Heart left ventricle (tissue), 16 donors: ENCODE measurements at regions of chr13 and their contacts with region 1.

Region 1: DNA sequence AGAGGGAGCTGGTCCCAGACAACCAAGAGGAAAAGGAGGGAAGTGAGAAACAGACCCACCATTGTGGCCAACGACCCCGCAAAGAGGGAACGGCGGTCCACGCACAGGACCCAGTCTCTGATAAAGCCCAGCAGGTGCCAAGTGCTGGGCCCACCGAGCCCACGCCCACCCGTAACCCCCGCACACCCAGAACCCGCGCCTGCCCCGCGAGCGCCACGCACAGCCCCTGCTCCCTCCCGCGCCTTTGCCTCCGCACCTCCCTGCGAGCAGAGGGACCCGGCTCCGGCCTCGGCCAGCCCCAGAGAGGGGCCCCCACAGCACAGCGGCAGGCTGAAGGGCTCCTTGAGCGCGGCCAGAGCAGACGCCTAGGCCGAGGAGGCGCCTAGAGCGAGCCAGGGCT is 1192.2 kb downstream of the PCDH17 start:
- DNase-seq: no peak
- ATAC-seq: no peak
- H3K4me3 ChIP-seq: no peak overlapping the region
- H3K27ac ChIP-seq: no peak overlapping the region
- H3K4me1 ChIP-seq: no peaks in the 10 kb centered on the region
- H3K27me3 ChIP-seq: no peaks in the 10 kb centered on the region
- CTCF ChIP-seq: no peak
- POLR2A ChIP-seq: no peak

Region 2: GRCh38 chr13:58619396-58620113 is 204.1 kb before region 1 on chr13:
- intact Hi-C with region 1: no loop called
- DNase-seq: no peak
- ATAC-seq: no peak
- H3K4me3 ChIP-seq: no peak overlapping the region
- H3K27ac ChIP-seq: no peak overlapping the region
- H3K4me1 ChIP-seq: no peaks in the 10 kb centered on the region
- H3K27me3 ChIP-seq: no peaks in the 10 kb centered on the region
- CTCF ChIP-seq: no peak
- POLR2A ChIP-seq: no peak

Region 3: GRCh38 chr13:58744686-58745085 is 79.0 kb before region 1 on chr13:
- intact Hi-C with region 1: loop called in 1 of 10 experiments (anchors 2 kb)
- DNase-seq: no peak
- ATAC-seq: no peak
- H3K4me3 ChIP-seq: no peak overlapping the region
- H3K27ac ChIP-seq: no peak overlapping the region
- H3K4me1 ChIP-seq: no peaks in the 10 kb centered on the region
- H3K27me3 ChIP-seq: no peaks in the 10 kb centered on the region
- CTCF ChIP-seq: no peak
- POLR2A ChIP-seq: no peak